ENCODE measurements at regions of chr22 and their contacts with region 1.

Region 1: GRCh38 chr22:50562523-50563412 is at the start of gene SYCE3:
- DNase-seq: peak; percentile 99
- ATAC-seq: peak; percentile 92
- H3K4me3 Mint-ChIP-seq: peak within 1 kb of the TSS; percentile 92
- H3K27ac Mint-ChIP-seq: peak within 1 kb of the TSS; percentile 91
- H3K4me1 Mint-ChIP-seq: peaks cover 14% of the 10 kb centered on the region
- H3K27me3 Mint-ChIP-seq: peaks cover 17% of the 10 kb centered on the region
- total RNA-seq, gene SYCE3: 0.79 to 1.1 TPM

Region 2: DNA sequence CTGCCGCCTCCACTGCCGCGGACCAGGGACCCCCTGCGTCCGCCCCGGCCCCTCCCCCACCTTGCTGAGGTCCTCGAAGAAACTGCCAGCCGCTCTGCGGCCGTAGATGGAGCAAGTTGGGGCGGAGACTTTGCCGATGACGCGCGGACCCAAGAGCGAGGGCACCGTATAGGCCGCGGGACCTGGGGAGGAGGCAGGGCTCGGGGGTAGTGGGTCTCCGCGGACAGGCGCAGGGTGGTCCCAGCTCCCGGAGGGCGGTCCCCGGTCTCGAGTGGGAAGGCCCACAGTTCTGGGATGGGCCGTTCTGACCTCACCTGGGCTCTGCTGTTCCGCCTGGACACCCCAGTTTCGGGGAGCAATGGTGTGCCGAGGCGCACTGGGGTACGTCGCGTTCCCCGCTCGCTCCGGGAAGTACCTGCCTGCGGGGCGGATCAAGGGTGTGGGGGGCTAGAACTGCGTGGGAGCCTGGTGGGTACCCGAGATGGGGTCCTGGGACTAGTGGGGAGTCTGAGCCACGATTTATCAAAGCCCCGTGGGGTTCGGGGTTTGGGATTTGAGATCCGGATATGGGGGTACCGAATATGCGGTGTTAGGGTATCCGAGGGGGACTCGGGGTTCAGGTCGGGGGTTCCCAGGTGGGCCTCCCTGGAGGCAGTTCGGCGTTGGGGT is 31.8 kb before region 1 on chr22:
- POLR2A ChIA-PET with region 1: interaction called, 127 read pairs
- DNase-seq: peak; percentile 87
- ATAC-seq: peak; percentile 37
- H3K4me3 Mint-ChIP-seq: peak overlapping the region; percentile 95
- H3K27ac Mint-ChIP-seq: peak overlapping the region; percentile 100
- H3K4me1 Mint-ChIP-seq: peaks cover 41% of the 10 kb centered on the region
- H3K27me3 Mint-ChIP-seq: no peaks in the 10 kb centered on the region

Region 3: GRCh38 chr22:50537765-50538164 is 25.0 kb before region 1 on chr22:
- POLR2A ChIA-PET with region 1: interaction called, 22 read pairs
- DNase-seq: no peak
- ATAC-seq: no peak
- H3K4me3 Mint-ChIP-seq: peak overlapping the region; percentile 52
- H3K27ac Mint-ChIP-seq: peak overlapping the region; percentile 100
- H3K4me1 Mint-ChIP-seq: peaks cover 62% of the 10 kb centered on the region
- H3K27me3 Mint-ChIP-seq: no peaks in the 10 kb centered on the region

Region 4: DNA sequence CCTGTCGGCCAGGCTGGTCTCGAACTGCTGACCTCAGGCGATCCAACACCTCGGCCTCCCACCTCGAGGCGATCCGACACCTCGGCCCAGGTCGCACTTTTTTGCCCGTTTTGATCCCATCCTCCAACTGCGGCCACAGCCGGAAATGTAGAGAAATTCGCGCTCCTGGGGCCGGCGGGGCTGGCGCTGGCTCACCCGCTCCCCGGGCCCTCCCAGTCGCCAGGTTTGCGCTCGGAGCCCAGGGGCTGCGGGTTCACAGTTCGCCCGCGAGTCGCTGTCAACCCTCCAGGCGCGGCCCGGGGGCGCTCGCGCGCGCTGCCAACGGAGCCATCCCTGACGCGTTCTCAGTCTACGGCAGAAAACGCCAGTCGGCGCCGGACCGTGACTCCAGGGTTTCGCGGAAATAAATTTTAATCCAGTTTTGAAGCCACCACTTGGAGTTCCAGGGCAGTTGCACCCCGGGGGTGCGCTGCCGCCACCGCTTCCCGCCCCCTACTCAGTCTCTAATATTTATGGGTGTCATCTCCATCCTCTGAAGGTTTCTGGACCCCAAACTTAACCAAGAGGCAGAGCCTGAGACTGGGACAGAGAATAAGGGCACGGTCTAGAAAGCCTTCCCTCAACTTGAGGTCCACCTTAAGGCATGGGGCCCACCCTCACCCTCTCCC is 18.6 kb before region 1 on chr22:
- POLR2A ChIA-PET with region 1: interaction called, 78 read pairs
- DNase-seq: peak; percentile 92
- ATAC-seq: peak; percentile 65
- H3K4me3 Mint-ChIP-seq: peak overlapping the region; percentile 77
- H3K27ac Mint-ChIP-seq: peak overlapping the region; percentile 98
- H3K4me1 Mint-ChIP-seq: peaks cover 51% of the 10 kb centered on the region
- H3K27me3 Mint-ChIP-seq: no peaks in the 10 kb centered on the region

Region 5: GRCh38 chr22:50576070-50576469 is 13.3 kb after region 1 on chr22:
- POLR2A ChIA-PET with region 1: interaction called, 19 read pairs
- DNase-seq: no peak
- ATAC-seq: no peak
- H3K4me3 Mint-ChIP-seq: no peak overlapping the region
- H3K27ac Mint-ChIP-seq: no peak overlapping the region
- H3K4me1 Mint-ChIP-seq: peaks cover 14% of the 10 kb centered on the region
- H3K27me3 Mint-ChIP-seq: no peaks in the 10 kb centered on the region

Region 6: DNA sequence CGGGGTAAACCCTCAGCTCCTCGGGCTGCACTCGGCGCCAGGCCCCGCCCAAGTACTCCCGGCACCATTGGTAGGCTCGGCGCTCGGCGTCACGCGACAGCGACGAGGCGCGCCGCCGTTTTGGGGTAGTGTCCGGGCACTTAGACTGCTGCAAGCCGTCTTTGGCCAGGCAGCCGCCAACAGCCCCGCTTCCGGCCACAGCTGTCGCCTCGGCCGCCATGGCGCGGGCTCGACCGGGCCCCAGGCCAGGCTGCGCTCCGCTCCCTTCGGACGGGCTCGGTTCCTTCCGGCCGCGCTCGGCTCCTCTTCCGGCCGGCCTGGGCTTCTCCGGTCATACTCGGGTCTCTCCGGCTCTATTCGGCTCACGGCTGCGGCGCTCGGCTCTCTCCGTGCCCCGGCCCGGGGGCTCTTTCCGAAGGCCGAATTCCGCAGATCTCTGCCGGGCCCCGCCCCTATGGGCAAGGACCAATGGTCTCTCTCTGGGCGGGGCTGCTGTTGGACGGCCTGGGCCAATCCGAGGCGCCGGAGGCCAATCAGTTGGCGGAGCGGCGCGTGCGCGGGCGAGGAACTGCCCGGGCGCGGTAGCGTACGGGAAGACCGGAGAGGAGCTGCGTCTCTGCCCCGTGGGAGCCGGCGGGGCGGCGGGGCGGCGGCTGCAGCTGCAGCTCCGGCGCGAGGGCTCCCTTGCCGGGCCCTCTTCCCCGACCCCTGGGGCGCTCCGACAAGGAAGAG is 20.0 kb after region 1 on chr22 and contains the start of gene CHKB:
- POLR2A ChIA-PET with region 1: interaction called, 19 read pairs
- DNase-seq: peak; percentile 98
- ATAC-seq: peak; percentile 94
- H3K4me3 Mint-ChIP-seq: peak within 1 kb of the TSS; percentile 99
- H3K27ac Mint-ChIP-seq: peak within 1 kb of the TSS; percentile 96
- H3K4me1 Mint-ChIP-seq: peaks cover 19% of the 10 kb centered on the region
- H3K27me3 Mint-ChIP-seq: no peaks in the 10 kb centered on the region
- total RNA-seq, gene CHKB: 132 to 137 TPM